Activated naive CD4-positive, alpha-beta T cell treated with anti-CD3 and anti-CD28 coated beads for 36 hours (primary cell): ENCODE measurements at regions of chr4 and their contacts with region 1.

Region 1: GRCh38 chr4:87838890-87839591 is 6.3 kb downstream of the MEPE start:
- DNase-seq: peak; percentile 22
- H3K4me3 Mint-ChIP-seq: no peak overlapping the region
- H3K27ac Mint-ChIP-seq: no peak overlapping the region
- H3K4me1 Mint-ChIP-seq: no peaks in the 10 kb centered on the region
- H3K27me3 Mint-ChIP-seq: peaks cover 18% of the 10 kb centered on the region

Region 2: GRCh38 chr4:87497159-87497558 is 341.9 kb before region 1 on chr4:
- CTCF ChIA-PET with region 1: interaction called, 3 read pairs
- intact Hi-C with region 1: loop called (anchors 1 kb)
- DNase-seq: peak; percentile 44
- H3K4me3 Mint-ChIP-seq: no peak overlapping the region
- H3K27ac Mint-ChIP-seq: no peak overlapping the region
- H3K4me1 Mint-ChIP-seq: peaks cover 3% of the 10 kb centered on the region
- H3K27me3 Mint-ChIP-seq: no peaks in the 10 kb centered on the region

Region 3: DNA sequence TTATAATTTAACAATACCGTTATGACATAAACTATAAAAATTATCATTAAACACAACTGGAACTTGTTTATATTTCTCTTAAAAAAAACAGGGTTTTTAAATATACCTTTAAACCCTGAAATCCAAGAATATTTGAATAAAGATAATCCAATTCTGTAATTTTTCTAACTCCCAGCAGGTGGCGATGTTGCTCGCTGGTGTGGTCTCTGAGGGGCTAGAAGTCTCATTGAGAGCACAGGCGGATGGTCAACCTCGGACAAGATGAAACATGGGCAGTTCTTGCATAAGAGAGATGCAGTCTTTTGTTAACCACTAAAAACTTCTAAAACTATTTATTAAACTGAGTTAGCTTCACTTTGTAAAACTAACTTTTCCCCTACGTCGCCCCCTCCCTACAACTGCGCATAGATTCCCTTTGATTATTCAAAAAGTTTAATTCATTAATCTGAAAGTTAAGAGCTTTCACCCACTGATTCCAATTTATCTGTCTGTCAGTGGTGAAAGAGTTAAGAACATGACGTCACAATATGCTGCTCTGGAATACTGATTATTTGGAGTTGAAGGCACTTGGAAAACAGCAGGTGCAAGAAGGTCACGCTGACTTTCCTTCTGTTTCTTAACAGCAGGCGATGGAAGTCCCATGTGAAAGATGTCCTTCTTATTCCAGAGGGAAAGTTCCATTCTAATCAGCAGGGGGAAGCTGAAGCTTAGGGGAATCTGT is 159.4 kb before region 1 on chr4:
- CTCF ChIA-PET with region 1: interaction called, 9 read pairs
- intact Hi-C with region 1: loop called (anchors 1 kb)
- DNase-seq: peak; percentile 37
- H3K4me3 Mint-ChIP-seq: no peak overlapping the region
- H3K27ac Mint-ChIP-seq: no peak overlapping the region
- H3K4me1 Mint-ChIP-seq: no peaks in the 10 kb centered on the region
- H3K27me3 Mint-ChIP-seq: peaks cover 1% of the 10 kb centered on the region